Caco-2 (cell line): ENCODE measurements at regions of chr3 and their contacts with region 1.

Region 1: GRCh38 chr3:196406811-196407470 is 25.3 kb downstream of the UBXN7 start:
- DNase-seq: peak in 1 of 2 experiments; percentile 23
- H3K4me3 ChIP-seq: no peak overlapping the region
- H3K4me3 Mint-ChIP-seq: no peak overlapping the region
- H3K27ac Mint-ChIP-seq: no peak overlapping the region
- H3K4me1 ChIP-seq: peaks cover 5% of the 10 kb centered on the region; the same call in 1 of the 2 replicates
- H3K4me1 Mint-ChIP-seq: no peaks in the 10 kb centered on the region
- H3K27me3 ChIP-seq: no peaks in the 10 kb centered on the region
- H3K27me3 Mint-ChIP-seq: no peaks in the 10 kb centered on the region
- CTCF ChIP-seq: no peak

Region 2: DNA sequence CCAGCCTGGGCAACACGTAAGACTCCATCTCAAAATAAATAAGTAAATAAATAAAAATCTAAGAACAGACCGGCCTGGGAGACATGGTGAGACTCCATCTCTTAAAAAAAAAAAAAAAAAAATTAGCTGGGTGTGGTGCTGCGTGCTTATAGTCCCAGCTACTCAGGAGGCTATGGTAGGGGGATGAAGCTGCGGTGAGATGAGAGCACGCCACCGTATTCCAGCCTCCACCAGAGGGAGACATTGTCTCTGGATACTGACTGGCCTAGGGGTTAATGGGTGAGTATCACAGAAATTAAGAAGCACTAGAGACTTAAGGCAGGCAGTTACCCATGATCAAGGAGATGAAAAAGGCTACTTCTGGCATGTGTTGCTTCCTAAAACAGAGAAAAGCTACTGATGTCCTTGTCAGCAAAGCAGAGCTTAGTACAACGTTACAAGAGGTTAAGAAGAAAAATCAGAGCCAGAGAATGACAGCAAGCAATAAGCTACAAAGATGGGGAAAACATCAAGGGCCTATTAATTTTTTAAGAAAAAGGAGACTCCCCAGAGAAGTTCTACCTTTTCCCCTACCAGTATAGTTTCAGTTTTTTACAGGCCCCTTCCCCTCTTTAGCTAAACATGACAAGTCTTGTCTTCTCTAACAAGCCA is 333.6 kb before region 1 on chr3:
- CTCF ChIA-PET with region 1: no interaction called
- POLR2A ChIA-PET with region 1: no interaction called
- intact Hi-C with region 1: no loop called
- DNase-seq: peak; percentile 65 to 76
- H3K4me3 ChIP-seq: no peak overlapping the region
- H3K4me3 Mint-ChIP-seq: no peak overlapping the region
- H3K27ac Mint-ChIP-seq: no peak overlapping the region
- H3K4me1 ChIP-seq: no peaks in the 10 kb centered on the region
- H3K4me1 Mint-ChIP-seq: no peaks in the 10 kb centered on the region
- H3K27me3 ChIP-seq: no peaks in the 10 kb centered on the region
- H3K27me3 Mint-ChIP-seq: no peaks in the 10 kb centered on the region
- CTCF ChIP-seq: peak; percentile 77 to 79

Region 3: DNA sequence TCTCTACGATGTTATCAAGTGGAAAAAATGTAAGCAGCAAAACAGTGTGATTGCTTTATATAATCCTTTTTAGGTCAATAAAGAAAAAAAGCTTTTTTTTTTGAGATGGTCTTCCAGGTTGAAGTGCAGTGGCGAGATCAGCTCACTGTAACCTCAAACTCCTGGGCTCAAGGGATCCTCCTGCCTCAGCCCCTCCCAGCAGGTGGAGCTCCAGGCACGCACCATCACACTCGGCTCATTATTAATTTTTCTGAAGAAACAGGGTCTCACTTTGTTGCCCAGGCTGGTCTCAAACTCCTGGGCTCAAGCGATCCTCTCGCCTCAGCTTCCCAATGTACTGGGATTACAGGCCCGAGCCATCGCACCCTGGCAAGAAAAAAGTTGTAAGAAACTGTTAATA is 79.3 kb after region 1 on chr3:
- CTCF ChIA-PET with region 1: no interaction called
- POLR2A ChIA-PET with region 1: interaction called, 11 read pairs
- intact Hi-C with region 1: no loop called
- DNase-seq: peak in 1 of 2 experiments; percentile 37
- H3K4me3 ChIP-seq: no peak overlapping the region
- H3K4me3 Mint-ChIP-seq: no peak overlapping the region
- H3K27ac Mint-ChIP-seq: no peak overlapping the region
- H3K4me1 ChIP-seq: no peaks in the 10 kb centered on the region
- H3K4me1 Mint-ChIP-seq: no peaks in the 10 kb centered on the region
- H3K27me3 ChIP-seq: no peaks in the 10 kb centered on the region
- H3K27me3 Mint-ChIP-seq: no peaks in the 10 kb centered on the region
- CTCF ChIP-seq: peak; percentile 31 to 51